K562 (cell line): ENCODE measurements at regions of chr19 and their contacts with region 1.

Region 1: DNA sequence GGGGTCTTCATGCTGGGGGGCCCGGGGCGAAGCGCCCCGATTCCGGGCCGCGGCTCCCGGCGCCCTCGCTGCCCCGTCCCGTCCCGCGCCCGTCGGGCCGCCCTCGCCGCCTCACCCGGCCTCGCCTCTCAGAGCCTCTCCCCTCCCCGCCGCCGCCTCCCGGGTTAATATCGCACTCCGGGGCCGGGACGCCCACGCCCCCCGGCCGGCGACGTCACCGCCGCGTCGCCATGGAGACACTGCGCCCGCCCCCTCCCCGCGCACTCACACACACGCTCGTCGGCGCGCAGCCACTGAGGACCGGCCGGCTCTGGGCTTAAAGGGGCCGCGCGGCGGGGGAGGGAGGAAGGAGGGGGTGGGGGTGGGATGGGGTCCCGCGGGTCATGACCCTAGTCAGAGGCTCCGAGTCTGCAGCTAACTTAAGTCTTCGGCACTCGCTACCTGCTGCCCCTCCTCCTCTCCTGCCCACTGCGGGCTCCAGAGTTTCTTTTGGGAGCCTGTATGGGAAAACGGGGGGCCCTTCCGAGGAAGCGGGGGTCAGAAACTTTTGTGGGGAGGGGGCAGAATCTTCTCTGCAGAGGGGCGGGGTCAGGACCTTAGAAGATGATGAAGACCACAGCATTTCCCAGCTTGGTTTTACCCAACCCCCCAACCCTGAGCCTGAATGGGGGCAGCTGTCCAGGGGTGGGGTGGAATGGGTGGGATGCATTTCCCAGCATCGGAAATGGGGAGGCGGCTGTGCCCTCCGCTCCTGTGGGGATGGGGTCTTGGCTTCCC is at the start of gene ERF:
- DNase-seq: peak; percentile 91 to 96 (median 94)
- ATAC-seq: peak; percentile 74
- H3K4me3 ChIP-seq: peak within 1 kb of the TSS; percentile 98
- H3K27ac ChIP-seq: peak within 1 kb of the TSS; percentile 96
- H3K4me1 ChIP-seq: peaks cover 19 to 58% of the 10 kb centered on the region in 2 experiments
- H3K27me3 ChIP-seq: no peaks in the 10 kb centered on the region
- CTCF ChIP-seq: no peak
- EP300 ChIP-seq: no peak
- POLR2A ChIP-seq: peak; percentile 40; the same call in 1 of the 2 replicates
- RAD21 ChIP-seq: no peak
- polyA plus RNA-seq, gene ERF: 0.03 to 0.13 TPM

Region 2: DNA sequence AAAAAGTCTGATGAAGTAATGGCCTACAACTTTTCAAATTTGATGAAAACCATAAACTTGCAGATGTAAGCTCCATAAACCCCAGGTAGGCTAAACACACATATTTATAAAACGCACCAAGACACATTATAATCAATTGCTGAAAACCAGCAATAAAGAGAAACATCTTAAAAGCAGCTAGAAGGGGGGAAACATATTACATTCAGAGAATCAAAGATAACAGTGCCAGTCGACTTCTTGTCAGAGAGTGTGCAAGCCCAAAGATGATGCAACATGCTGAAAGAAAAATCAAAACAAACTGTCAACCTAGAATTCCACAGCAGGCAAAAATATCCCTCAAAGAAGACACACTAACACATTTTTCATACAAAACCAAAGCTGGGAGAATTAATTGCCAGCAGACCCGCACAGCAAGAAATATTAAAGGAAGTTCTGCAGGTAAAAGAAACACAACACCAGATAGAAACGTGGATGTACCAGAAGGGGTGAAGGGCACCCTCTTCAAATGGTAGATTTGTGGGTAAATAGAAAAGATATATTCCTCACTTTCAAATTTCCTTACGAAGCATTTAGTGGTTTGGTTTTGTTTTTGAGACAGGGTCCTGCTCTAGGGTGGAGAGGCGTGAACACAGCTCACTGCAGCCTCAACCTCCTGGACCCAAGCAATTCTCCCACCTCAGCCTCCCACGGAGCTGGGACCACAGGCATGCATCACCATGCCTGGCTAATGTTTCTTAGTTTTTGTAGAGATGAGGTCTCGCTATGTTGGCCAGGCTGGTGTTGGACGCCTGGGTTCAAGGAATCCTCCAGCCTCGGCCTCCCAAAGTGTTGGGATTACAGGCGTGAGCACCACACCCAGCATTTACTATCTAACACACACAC is 244.7 kb before region 1 on chr19:
- CTCF ChIA-PET with region 1: no interaction called
- POLR2A ChIA-PET with region 1: no interaction called
- in situ Hi-C with region 1: no loop called
- intact Hi-C with region 1: no loop called
- DNase-seq: peak in 1 of 4 experiments; percentile 31
- ATAC-seq: peak; percentile 78
- H3K4me3 ChIP-seq: no peak overlapping the region
- H3K27ac ChIP-seq: peak overlapping the region; percentile 51; the same call in 2 of the 3 replicates
- H3K4me1 ChIP-seq: peaks cover 10 to 12% of the 10 kb centered on the region in 2 experiments
- H3K27me3 ChIP-seq: peaks cover 0 to 2% of the 10 kb centered on the region in 2 experiments; a peak in 2 of 5 replicates
- CTCF ChIP-seq: no peak
- EP300 ChIP-seq: peak; percentile 98
- POLR2A ChIP-seq: no peak
- RAD21 ChIP-seq: peak in 1 of 2 experiments; percentile 22; a peak in 1 of 4 replicates

Region 3: GRCh38 chr19:42268704-42269477 is 13.7 kb after region 1 on chr19 and contains the start of gene CIC:
- CTCF ChIA-PET with region 1: no interaction called
- POLR2A ChIA-PET with region 1: interaction called, 6 read pairs
- in situ Hi-C with region 1: no loop called
- intact Hi-C with region 1: loop called (anchors 2 kb)
- DNase-seq: peak; percentile 85 to 100 (median 92)
- ATAC-seq: peak; percentile 92
- H3K4me3 ChIP-seq: peak within 1 kb of the TSS; percentile 54
- H3K27ac ChIP-seq: peak within 1 kb of the TSS; percentile 98
- H3K4me1 ChIP-seq: peaks cover 17 to 51% of the 10 kb centered on the region in 2 experiments
- H3K27me3 ChIP-seq: no peaks in the 10 kb centered on the region
- CTCF ChIP-seq: no peak
- EP300 ChIP-seq: no peak
- POLR2A ChIP-seq: no peak
- RAD21 ChIP-seq: no peak
- polyA plus RNA-seq, gene CIC: 0.07 to 0.13 TPM